ENCODE measurements at regions of chr1 and their contacts with region 1.

Region 1: DNA sequence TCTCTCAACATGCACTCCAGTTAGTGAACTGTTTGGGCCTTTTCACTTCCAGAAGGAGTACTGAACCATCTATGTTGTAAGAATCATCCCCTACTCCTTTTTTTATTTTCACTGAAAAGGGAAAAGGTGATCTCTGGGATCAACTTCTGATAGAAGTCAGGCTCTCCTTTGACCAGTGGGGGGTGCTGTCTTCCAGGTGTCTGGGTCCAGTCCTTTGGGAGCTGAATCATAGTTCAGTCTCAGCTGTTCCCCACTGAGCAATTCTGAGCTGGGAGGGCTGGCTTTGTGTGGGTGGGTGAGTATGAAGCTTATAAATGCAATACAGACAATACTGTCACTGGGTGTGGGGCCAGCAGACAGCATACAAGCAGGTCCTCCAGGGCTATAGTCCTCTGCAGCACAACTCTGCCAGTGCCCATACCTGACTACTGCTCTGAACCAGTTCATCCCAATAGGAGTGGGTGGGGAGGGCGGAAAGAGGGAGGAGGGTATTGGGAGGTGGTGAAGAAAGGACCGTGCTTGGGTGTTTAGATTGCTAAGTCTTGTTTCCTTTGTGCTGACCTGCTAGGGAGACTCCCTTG is 12.5 kb upstream of the SARS1 start:
- DNase-seq: no peak
- H3K4me3 ChIP-seq: no peak overlapping the region
- H3K27ac ChIP-seq: peak overlapping the region in 2 of 4 donors; percentile 17 to 64
- H3K4me1 ChIP-seq: peaks cover 16 to 33% (median 21%) of the 10 kb centered on the region in 3 donors
- H3K27me3 ChIP-seq: no peaks in the 10 kb centered on the region
- CTCF ChIP-seq: peak in 5 of 6 experiments; percentile 41 to 79 (median 67)
- POLR2A ChIP-seq: no peak

Region 2: DNA sequence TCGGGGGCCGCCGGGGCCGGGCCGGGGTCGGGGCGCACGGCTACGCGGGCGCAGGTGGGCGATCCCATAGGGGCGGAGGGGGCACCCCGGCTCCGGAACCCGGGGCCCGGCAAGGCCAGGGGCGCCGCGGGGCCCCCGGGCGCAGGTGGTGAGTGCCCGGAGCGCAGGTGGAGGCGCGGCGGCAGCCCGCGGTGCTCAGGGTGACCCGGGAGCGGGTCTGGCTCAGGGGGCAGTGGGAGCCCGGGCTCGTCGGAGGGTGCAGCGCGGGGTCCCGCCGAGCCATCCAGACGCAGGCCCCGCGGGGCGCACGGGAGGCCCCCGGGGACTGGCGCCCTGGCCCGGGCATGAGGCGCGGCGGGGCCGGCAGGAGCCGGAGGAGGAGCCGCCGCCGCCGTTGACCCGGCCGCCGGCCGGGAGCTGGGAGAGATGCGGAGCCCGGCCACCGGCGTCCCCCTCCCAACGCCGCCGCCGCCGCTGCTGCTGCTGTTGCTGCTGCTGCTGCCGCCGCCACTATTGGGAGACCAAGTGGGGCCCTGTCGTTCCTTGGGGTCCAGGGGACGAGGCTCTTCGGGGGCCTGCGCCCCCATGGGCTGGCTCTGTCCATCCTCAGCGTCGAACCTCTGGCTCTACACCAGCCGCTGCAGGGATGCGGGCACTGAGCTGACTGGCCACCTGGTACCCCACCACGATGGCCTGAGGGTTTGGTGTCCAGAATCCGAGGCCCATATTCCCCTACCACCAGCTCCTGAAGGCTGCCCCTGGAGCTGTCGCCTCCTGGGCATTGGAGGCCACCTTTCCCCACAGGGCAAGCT is 48.6 kb after region 1 on chr1:
- intact Hi-C with region 1: loop called (anchors 10 kb)
- DNase-seq: no peak
- H3K4me3 ChIP-seq: peak overlapping the region; percentile 62 to 85 (median 82)
- H3K27ac ChIP-seq: peak overlapping the region; percentile 62 to 87 (median 79)
- H3K4me1 ChIP-seq: peaks cover 22 to 60% (median 25%) of the 10 kb centered on the region in 3 donors
- H3K27me3 ChIP-seq: peaks cover 0 to 3% (median 0%) of the 10 kb centered on the region in 4 donors
- CTCF ChIP-seq: no peak
- POLR2A ChIP-seq: no peak